ENCODE measurements at regions of chr3 and their contacts with region 1.

Region 1: DNA sequence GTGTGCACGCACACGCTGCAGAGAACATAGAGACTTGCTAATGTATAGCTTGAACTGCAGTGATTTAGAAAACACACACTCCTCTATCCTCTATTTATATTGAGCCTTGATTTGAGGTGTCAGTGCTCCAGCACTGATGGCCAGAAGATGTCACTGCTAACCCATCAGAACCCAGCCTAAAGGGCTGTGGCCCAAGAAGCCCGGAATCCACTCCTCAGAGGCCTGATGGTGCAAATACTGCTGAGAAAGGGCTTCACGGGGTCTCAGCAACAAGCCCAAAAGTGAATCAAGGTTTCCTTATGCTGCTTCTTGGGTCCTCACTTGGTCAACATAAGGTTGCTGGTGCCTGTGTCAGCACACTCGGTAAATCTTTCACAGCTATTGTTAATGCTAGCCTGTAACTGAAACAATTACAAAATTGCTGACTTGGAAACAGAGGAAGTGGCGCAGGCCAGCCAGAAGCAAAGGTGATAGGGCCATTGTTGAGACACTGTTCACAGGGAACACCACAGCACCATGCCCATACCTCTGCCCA is 60.3 kb downstream of the HEG1 start:
- DNase-seq: peak; percentile 8 to 59 (median 34)
- H3K4me3 ChIP-seq: no peak overlapping the region
- H3K4me3 Mint-ChIP-seq: no peak overlapping the region
- H3K27ac ChIP-seq: no peak overlapping the region
- H3K27ac Mint-ChIP-seq: peak overlapping the region in 5 of 8 donors; percentile 25 to 92 (median 38)
- H3K4me1 ChIP-seq: peaks cover 4% of the 10 kb centered on the region
- H3K4me1 Mint-ChIP-seq: peaks cover 0 to 7% (median 6%) of the 10 kb centered on the region in 3 donors
- H3K27me3 ChIP-seq: no peaks in the 10 kb centered on the region
- H3K27me3 Mint-ChIP-seq: peaks cover 0 to 1% of the 10 kb centered on the region in 2 donors

Region 2: DNA sequence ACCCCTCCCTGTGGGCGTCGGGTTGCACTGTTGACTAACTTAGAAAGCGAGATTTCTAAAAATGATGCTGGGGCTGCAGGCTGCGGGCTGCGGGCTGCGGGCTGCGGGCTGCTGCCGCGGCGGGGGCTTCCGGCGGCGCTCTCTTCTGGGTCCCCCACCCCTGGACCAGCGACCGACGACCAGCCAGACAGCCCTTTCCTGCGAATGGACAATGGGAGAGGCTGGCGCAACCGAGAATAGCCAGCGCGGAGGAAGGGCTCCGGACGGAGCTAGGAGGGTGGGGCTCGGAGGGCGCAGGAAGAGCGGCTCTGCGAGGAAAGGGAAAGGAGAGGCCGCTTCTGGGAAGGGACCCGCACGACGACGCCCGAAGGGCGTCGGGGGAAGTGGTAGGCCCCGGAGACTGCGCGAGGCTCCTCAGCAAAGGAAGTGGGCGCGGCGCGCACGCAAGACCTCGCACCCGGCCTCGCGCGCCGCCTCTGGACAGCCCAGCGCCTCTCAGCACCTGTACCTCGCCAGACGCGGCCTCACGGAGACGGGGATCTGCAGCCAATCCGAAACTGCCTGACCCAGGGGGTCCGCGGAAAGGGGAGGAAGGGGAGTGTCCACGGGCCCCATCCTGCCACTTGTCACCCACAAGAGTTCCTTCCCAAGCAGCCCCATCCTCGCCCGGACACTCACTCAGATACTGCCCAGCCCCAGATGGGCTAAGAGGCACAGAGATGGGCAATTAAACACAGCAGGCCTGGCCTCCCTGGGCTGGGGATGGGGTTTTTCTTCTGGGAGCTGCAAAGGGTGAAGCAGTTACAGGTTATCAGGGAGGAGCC is 146.3 kb after region 1 on chr3:
- CTCF ChIA-PET with region 1: interaction called, 12 read pairs
- POLR2A ChIA-PET with region 1: no interaction called
- DNase-seq: peak; percentile 42 to 81 (median 65)
- H3K4me3 ChIP-seq: peak overlapping the region; percentile 66
- H3K4me3 Mint-ChIP-seq: peak overlapping the region; percentile 69 to 92 (median 81)
- H3K27ac ChIP-seq: no peak overlapping the region
- H3K27ac Mint-ChIP-seq: peak overlapping the region; percentile 62 to 93 (median 80)
- H3K4me1 ChIP-seq: peaks cover 19% of the 10 kb centered on the region
- H3K4me1 Mint-ChIP-seq: peaks cover 29 to 37% (median 33%) of the 10 kb centered on the region in 3 donors
- H3K27me3 ChIP-seq: no peaks in the 10 kb centered on the region
- H3K27me3 Mint-ChIP-seq: no peaks in the 10 kb centered on the region

Region 3: DNA sequence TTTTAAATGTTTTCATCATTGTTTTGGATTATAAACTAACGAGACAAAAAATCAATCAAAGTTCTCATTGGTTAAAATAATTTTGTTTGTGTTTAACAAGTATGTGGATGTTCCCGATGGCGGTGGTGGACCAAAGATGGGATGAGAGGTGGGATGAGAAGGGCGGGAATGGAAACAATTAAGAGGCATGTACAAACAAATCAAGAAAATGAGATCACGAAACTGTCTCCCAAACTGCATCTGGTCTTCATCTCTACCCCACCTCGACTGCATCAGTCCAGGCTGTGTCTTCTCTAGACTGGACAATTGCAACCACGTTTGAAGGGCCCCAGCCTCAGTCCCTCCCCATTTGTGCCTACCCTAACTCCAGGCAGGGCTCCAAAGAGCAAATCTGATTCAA is 160.9 kb after region 1 on chr3:
- CTCF ChIA-PET with region 1: no interaction called
- POLR2A ChIA-PET with region 1: no interaction called
- DNase-seq: no peak
- H3K4me3 ChIP-seq: no peak overlapping the region
- H3K4me3 Mint-ChIP-seq: no peak overlapping the region
- H3K27ac ChIP-seq: no peak overlapping the region
- H3K27ac Mint-ChIP-seq: no peak overlapping the region
- H3K4me1 ChIP-seq: no peaks in the 10 kb centered on the region
- H3K4me1 Mint-ChIP-seq: peaks cover 8 to 9% (median 8%) of the 10 kb centered on the region in 3 donors
- H3K27me3 ChIP-seq: no peaks in the 10 kb centered on the region
- H3K27me3 Mint-ChIP-seq: peaks cover 0 to 8% of the 10 kb centered on the region in 2 donors

Region 4: DNA sequence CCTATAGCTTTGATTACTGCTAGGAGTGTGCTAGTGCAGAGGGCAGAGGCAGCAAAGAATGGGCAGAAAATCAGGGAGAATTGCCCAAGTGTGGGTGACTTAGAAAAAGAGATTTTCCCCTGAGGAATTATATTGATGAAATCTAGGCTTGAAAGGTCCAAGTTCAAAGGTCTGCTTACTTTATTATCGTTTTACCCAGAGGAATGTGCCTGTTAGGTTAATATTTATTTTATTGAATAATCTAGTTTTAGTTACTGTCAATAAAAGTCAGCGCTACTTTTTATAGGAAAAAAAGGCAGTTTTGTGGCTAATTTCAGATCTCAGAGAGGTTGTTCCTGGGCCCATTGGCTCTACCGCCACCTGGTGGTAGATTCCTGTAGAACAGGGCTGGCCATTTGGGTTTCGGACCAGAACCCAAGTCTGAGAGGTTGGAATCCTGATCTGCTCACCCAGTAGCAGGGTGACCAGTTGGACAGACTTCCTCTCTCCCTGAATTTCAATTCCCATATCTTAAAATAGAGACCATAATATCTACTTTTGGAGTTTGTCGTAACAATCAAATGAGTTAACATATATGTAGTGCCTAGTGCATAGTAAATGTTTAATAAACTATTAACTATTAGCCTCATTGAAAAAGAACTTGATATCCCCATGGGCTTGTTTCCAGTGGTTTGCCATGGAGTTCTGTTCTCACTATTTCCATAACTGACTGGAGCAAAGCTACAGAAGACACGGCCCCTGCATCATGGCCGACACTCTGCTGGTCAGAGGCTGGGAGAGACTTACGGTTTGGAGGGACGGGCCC is 442.3 kb after region 1 on chr3:
- CTCF ChIA-PET with region 1: interaction called, 23 read pairs
- POLR2A ChIA-PET with region 1: no interaction called
- DNase-seq: peak; percentile 35 to 71 (median 46)
- H3K4me3 ChIP-seq: no peak overlapping the region
- H3K4me3 Mint-ChIP-seq: no peak overlapping the region
- H3K27ac ChIP-seq: no peak overlapping the region
- H3K27ac Mint-ChIP-seq: no peak overlapping the region
- H3K4me1 ChIP-seq: no peaks in the 10 kb centered on the region
- H3K4me1 Mint-ChIP-seq: peaks cover 0 to 7% (median 4%) of the 10 kb centered on the region in 3 donors
- H3K27me3 ChIP-seq: no peaks in the 10 kb centered on the region
- H3K27me3 Mint-ChIP-seq: no peaks in the 10 kb centered on the region

Measured in CD8-positive, alpha-beta memory T cell (primary cell).